Lower lobe of right lung (tissue), 2 donors: ENCODE measurements at regions of chr7 and their contacts with region 1.

Region 1: GRCh38 chr7:112400141-112400540 is 50.1 kb upstream of the IFRD1 start:
- DNase-seq: no peak
- ATAC-seq: no peak
- H3K4me3 ChIP-seq: no peak overlapping the region
- H3K27ac ChIP-seq: no peak overlapping the region
- H3K4me1 ChIP-seq: no peaks in the 10 kb centered on the region
- H3K27me3 ChIP-seq: no peaks in the 10 kb centered on the region
- CTCF ChIP-seq: no peak

Region 2: DNA sequence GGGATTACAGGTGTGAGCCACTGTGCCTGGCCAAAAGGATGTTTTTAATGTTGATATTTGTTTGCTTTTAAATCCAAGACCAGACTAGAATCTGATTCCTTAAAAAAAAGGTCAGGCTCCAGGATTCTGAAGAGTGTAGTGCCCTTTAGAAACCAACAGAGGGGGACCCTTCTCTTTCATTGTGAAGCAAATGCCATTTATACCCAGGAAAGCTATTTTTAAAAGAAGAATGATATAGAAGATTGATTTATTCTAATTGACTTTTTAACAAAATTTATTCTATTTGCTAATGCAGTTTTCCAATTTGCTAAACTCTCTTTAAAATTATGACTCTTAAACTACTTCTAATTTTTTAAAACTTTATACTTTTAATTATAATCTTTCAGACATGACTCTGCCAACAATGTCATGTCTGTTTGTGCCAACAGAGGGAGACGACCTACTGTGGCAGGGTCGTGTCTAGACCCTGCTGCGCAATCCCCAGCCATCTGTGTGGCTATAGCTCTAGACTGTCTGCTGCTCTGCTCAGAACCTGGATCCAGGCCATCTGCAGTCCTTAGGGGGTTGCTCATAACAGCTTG is 636.8 kb before region 1 on chr7:
- intact Hi-C with region 1: loop called (anchors 10 kb)
- DNase-seq: no peak
- ATAC-seq: no peak
- H3K4me3 ChIP-seq: no peak overlapping the region
- H3K27ac ChIP-seq: no peak overlapping the region
- H3K4me1 ChIP-seq: no peaks in the 10 kb centered on the region
- H3K27me3 ChIP-seq: no peaks in the 10 kb centered on the region
- CTCF ChIP-seq: peak; percentile 29